Gastrocnemius medialis (tissue), 4 donors: ENCODE measurements at regions of chr10 and their contacts with region 1.

Region 1: DNA sequence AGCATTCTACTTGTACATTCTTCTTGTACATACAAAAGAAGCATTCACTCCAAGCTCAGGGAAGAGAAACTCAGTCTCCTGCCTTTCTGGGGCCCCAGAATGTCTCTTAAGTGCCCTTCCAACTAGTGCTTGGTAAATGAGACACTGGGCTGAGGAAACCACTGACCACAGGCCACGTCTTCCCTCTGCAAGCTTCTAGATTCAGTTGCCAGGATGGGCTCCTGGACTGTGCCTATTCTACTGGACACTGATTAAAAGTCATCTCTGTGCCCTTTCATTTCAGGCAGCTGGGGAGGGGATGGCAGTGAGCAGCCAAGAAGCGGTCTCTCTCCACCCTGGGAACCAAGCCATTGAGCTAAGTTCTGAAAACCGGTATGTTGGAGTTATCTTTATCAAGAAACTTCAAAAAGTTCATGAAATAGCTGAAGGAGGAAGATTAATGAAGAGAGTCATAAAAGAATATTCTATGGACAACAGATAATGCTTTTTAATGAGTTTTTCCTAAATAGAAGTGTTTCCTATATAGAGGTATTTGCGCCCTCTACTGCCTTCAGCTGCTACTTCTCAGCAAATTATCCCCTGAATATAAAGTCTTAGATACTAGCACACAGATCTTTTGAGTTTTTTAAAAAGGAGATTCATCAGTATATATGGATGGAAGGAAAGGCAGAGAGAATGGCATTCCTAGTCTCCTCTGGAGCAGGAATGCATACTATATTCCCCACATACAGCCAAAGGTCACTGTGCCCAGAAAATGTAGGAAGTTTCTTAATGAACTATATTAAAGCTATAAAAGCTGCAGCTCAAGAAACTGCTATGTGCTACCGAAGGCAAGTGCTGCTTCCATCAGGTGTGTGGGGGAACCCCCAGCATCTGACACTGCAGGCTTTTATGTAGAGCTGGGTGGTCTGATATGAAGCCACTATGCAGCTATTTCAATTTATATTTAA is 8.4 kb upstream of the IFIT1B start:
- DNase-seq: no peak
- ATAC-seq: no peak
- H3K4me3 ChIP-seq: no peak overlapping the region
- H3K27ac ChIP-seq: no peak overlapping the region
- H3K4me1 ChIP-seq: peaks cover 11 to 16% of the 10 kb centered on the region in 2 donors
- H3K27me3 ChIP-seq: no peaks in the 10 kb centered on the region
- CTCF ChIP-seq: peak in 4 of 5 experiments; percentile 7 to 46 (median 28)
- POLR2A ChIP-seq: no peak

Region 2: DNA sequence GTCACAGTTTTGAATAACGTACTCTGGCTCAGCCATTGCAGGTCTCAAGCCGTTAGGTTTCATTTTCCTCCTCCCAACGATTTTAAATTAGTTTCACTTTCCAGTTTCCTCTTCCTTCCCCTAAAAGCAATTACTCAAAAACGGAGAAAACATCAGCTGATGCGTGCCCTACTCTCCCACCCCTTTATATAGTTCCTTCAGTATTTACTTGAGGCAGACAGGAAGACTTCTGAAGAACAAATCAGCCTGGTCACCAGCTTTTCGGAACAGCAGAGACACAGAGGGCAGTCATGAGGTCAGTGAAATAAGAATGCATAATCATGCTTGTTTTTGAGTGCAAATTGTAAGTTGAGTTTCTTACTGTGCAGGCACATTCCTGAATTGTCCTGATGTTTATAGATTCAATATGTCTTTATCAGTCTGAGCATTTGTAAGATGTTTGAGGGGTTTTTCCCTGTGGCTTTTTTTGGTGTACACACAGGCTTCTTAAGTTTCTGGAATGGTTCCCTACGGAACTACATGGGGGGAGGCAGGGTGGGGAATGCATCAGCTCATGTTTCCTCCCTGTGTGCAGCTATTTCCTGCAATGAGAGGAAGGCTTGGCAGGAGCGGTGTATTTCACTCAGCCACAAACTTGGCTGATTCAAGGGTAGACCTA is 41.5 kb before region 1 on chr10 and contains the start of gene IFIT3:
- in situ Hi-C with region 1: no loop called
- intact Hi-C with region 1: no loop called
- DNase-seq: peak; percentile 61 to 69
- ATAC-seq: peak; percentile 88 to 91
- H3K4me3 ChIP-seq: peak within 1 kb of the TSS; percentile 45 to 55 (median 50)
- H3K27ac ChIP-seq: peak within 1 kb of the TSS; percentile 73 to 82 (median 80)
- H3K4me1 ChIP-seq: peaks cover 20 to 32% of the 10 kb centered on the region in 2 donors
- H3K27me3 ChIP-seq: no peaks in the 10 kb centered on the region
- CTCF ChIP-seq: no peak
- POLR2A ChIP-seq: peak in 1 of 2 donors; percentile 30
- total RNA-seq, gene IFIT3: 2.2 to 8.9 (median 3.7) TPM

Region 3: GRCh38 chr10:89391917-89392756 is 22.7 kb after region 1 on chr10 and contains the start of gene IFIT1:
- in situ Hi-C with region 1: no loop called
- intact Hi-C with region 1: loop called (anchors 2 kb)
- DNase-seq: peak; percentile 57 to 65
- ATAC-seq: peak; percentile 93 to 97
- H3K4me3 ChIP-seq: peak within 1 kb of the TSS; percentile 58 to 70 (median 58)
- H3K27ac ChIP-seq: peak within 1 kb of the TSS; percentile 72 to 86 (median 84)
- H3K4me1 ChIP-seq: peaks cover 40 to 43% of the 10 kb centered on the region in 2 donors
- H3K27me3 ChIP-seq: no peaks in the 10 kb centered on the region
- CTCF ChIP-seq: no peak
- POLR2A ChIP-seq: peak in 1 of 2 donors; percentile 56
- total RNA-seq, gene IFIT1: 1.8 to 8.9 (median 3.0) TPM

Region 4: DNA sequence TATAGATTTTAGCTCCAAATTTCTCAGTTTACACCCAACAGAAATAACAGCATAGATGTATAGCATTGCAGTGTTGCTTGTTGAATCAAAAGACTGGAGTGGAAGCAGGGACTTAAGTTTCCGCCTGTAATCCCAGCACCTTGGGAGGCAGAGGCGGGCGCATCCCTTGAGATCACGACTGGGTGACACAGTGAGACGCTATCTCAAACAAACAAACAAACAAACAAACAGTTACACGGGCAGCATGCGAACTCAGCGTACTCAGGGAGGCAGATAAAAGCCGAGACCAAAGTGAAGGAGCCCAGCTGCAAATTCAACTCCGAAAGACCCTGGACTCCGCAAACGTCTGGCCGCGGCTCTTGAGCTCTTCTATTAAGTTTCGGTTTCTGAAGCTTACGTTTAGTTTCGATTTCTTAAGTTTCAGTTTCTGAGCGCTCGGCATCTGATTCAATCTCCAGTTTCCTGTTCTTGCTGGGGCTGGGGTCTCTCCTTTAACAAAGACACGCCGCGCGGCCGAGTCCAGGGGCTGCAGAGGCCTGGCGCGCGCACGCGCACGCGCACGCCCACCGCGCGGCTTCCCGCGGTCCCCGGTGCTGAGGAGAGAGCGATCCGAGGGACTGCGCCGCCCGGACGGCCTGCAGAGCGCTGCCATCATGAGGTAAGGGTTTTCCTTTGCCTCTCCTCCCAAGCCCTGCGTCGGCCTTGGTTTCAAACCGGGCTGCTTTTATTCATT is 44.9 kb after region 1 on chr10 and contains the start of gene IFIT5:
- in situ Hi-C with region 1: no loop called
- intact Hi-C with region 1: loop called (anchors 2 kb)
- DNase-seq: peak; percentile 46 to 57
- ATAC-seq: peak; percentile 87 to 91
- H3K4me3 ChIP-seq: peak within 1 kb of the TSS; percentile 76 to 85 (median 80)
- H3K27ac ChIP-seq: peak within 1 kb of the TSS; percentile 78 to 88 (median 83)
- H3K4me1 ChIP-seq: peaks cover 5 to 17% of the 10 kb centered on the region in 2 donors
- H3K27me3 ChIP-seq: no peaks in the 10 kb centered on the region
- CTCF ChIP-seq: no peak
- POLR2A ChIP-seq: peak; percentile 35 to 55
- total RNA-seq, gene IFIT5: 2.4 to 5.5 (median 3.3) TPM

Region 5: DNA sequence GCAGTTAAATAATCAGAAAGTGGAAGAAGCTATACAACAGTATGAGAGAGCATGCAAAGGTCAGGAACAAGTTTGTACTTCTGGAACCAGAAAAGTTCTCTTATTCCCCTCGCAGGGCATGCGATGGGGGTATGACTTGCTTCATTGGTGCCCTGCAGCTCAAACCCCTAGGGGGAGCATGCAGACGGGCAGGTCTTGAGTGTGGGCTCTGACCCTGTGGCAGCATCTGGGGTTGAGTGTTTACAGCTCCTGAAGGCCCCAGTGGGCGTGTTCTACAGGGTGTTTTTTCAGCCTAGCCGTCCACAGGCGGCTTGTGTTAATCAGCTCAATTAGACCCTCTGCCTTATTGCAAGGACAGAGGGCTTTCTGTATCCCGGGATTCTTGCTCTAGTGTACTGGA is 376.5 kb after region 1 on chr10:
- in situ Hi-C with region 1: no loop called
- intact Hi-C with region 1: no loop called
- DNase-seq: no peak
- ATAC-seq: no peak
- H3K4me3 ChIP-seq: no peak overlapping the region
- H3K27ac ChIP-seq: no peak overlapping the region
- H3K4me1 ChIP-seq: no peaks in the 10 kb centered on the region
- H3K27me3 ChIP-seq: no peaks in the 10 kb centered on the region
- CTCF ChIP-seq: no peak
- POLR2A ChIP-seq: no peak

Region 6: DNA sequence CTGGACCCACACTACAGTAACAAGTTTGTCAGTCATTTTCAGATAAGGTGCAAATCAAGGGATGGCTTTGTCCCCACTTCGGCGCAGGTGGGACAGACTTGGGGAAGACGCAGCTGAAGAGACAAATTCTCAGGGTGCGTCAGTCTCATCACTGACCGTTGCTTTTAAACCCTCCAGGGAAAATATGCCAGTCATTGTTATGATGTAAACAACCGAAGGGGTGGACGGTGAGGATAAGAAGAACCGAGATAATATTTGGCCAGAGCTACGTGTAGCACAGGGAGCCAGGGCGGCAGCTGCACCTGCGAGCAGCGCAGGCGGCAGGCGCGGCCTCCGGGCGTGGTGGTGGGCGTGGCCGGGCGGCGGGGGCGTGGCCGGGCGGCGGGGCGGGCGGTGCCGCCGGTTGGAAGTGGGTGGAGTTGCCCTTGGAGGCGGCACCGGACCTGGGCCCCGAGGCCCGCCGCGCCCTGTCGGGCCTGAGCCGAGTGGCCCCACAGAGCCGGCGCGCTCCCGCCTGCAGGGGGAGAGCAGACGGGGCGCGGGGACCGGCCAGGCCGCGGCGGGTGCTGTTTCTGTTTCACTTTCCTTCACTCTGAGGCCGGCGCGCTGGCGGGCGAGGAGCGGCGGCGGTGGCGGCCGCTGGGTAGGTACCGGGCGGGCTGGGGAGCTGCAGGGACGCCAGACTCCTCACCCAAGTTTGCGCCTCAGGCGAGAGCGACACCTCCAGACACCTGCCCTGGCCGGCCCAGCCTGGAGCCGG is 1850.9 kb after region 1 on chr10 and contains the start of gene PCGF5:
- in situ Hi-C with region 1: no loop called
- intact Hi-C with region 1: loop called (anchors 10 kb)
- DNase-seq: peak; percentile 80 to 92
- ATAC-seq: peak; percentile 85 to 92
- H3K4me3 ChIP-seq: peak within 1 kb of the TSS; percentile 76 to 88 (median 82)
- H3K27ac ChIP-seq: peak within 1 kb of the TSS; percentile 88 to 95 (median 92)
- H3K4me1 ChIP-seq: peaks cover 36 to 55% of the 10 kb centered on the region in 2 donors
- H3K27me3 ChIP-seq: no peaks in the 10 kb centered on the region
- CTCF ChIP-seq: peak; percentile 42 to 69 (median 57)
- POLR2A ChIP-seq: peak; percentile 56 to 86
- total RNA-seq, gene PCGF5: 46.2 to 63.5 (median 49.1) TPM